MCF 10A (cell line): ENCODE measurements at regions of chrX and their contacts with region 1.

Region 1: DNA sequence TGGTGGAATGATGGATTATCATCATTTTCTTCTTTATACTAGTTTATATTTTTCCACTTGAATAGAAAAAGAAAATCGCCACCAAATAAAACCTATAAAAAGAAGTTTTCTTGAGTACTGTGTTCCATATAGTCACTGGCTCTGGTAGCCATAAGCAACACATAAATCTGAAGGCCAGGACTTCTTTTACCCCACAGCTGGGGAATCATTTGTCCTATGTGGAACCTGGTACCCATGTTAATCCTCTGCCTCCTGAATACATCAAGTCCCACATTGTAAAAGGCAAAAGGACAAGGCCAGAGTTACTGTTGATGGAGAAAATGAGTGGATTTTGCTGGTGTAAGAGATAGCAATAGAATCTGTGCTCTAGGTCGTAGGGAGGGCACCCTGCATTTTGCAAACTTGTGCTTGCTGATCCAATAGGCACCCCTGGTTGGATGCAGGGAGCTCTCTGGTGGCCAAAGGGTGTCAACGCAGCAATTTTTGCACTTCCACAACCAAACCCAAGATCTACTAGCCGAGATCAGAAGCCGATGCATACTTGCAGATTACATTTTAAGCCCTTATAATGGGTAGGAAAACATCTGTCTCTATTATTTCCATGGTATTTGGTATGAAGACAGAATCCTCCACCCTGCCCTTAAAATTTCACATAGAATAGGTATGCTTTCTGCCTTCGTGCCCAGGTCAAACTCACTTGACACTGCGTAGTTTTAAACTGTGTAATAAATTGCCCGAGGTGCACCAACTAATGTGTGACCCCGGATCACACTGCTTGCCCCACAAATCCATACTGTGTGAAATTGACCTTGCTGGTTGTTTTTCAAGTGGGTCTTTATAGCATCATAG is 146.2 kb upstream of the SCML1 start:
- DNase-seq: peak; percentile 79
- H3K4me3 Mint-ChIP-seq: peak overlapping the region; percentile 38
- H3K27ac Mint-ChIP-seq: peak overlapping the region; percentile 30
- H3K4me1 Mint-ChIP-seq: peaks cover 30% of the 10 kb centered on the region
- H3K27me3 Mint-ChIP-seq: peaks cover 14% of the 10 kb centered on the region
- CTCF ChIP-seq: peak; percentile 86

Region 2: DNA sequence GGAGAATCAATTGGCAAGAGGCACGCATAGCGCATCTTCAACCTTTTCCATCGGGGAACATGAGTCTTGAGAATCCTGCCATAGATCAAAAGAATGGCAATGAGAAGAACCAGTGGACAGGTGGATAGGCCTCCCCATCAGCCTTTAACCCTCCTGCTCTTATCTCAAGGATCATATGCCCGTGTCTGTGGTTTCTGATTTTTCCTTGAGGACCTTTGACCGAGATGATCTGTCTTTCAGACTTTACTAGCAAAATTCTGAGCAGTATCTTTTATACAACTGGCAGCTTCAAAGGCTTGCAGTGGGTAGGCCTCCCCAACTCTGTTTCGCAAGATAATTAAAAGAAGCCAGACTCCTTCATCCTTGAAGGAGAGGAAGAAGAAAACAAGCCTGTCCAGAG is 470.3 kb before region 1 on chrX:
- CTCF ChIA-PET with region 1: interaction called, 14 read pairs
- POLR2A ChIA-PET with region 1: interaction called, 4 read pairs
- intact Hi-C with region 1: loop called (anchors 1 kb)
- DNase-seq: no peak
- H3K4me3 Mint-ChIP-seq: no peak overlapping the region
- H3K27ac Mint-ChIP-seq: no peak overlapping the region
- H3K4me1 Mint-ChIP-seq: no peaks in the 10 kb centered on the region
- H3K27me3 Mint-ChIP-seq: no peaks in the 10 kb centered on the region
- CTCF ChIP-seq: no peak

Region 3: DNA sequence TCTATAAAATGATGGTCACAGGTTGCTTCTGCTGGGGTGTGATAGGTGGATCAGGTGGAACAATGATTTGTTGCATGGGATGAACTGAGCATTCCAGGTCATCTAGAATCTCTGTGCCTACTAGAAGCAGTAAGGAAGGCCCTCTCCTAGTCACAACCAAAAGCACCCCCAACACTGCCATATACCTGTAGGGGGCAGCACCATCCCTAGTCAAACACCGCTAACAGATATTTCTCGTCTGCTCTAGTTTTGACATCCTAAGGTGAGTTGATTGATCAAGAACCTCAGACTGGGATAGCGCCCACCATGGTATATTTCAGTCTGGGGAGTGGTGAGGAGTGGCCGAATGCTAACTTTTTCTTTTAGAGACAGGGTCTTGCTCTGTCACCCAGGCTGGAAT is 55.9 kb before region 1 on chrX:
- CTCF ChIA-PET with region 1: interaction called, 4 read pairs
- POLR2A ChIA-PET with region 1: no interaction called
- intact Hi-C with region 1: loop called (anchors 1 kb)
- DNase-seq: peak; percentile 78
- H3K4me3 Mint-ChIP-seq: no peak overlapping the region
- H3K27ac Mint-ChIP-seq: no peak overlapping the region
- H3K4me1 Mint-ChIP-seq: no peaks in the 10 kb centered on the region
- H3K27me3 Mint-ChIP-seq: peaks cover 73% of the 10 kb centered on the region
- CTCF ChIP-seq: peak; percentile 42

Region 4: DNA sequence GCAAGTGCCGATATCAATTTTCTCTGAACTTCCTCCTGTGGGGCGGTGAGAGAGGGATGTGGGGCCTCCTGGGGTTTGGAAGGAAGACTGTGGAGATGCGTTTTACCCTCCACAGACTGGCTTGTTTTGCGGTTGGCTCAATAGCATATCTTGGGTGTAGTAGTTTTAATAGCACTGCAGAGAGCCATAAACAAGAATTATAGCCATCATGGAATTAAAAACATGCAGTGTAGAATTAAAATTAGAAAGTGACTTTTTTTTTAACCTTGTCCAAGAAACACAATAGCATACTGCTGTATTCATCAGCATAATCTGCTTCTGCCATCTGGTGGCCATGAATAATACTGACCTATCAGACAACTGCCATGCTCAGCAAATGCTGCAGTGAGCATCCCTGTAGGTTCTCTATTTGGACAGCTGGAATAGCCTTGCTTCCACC is 98.9 kb after region 1 on chrX:
- CTCF ChIA-PET with region 1: interaction called, 17 read pairs
- POLR2A ChIA-PET with region 1: no interaction called
- intact Hi-C with region 1: loop called (anchors 1 kb)
- DNase-seq: peak; percentile 73
- H3K4me3 Mint-ChIP-seq: no peak overlapping the region
- H3K27ac Mint-ChIP-seq: no peak overlapping the region
- H3K4me1 Mint-ChIP-seq: no peaks in the 10 kb centered on the region
- H3K27me3 Mint-ChIP-seq: peaks cover 36% of the 10 kb centered on the region
- CTCF ChIP-seq: peak; percentile 64